Heart right ventricle (tissue), 16 donors: ENCODE measurements at regions of chr17 and their contacts with region 1.

Region 1: DNA sequence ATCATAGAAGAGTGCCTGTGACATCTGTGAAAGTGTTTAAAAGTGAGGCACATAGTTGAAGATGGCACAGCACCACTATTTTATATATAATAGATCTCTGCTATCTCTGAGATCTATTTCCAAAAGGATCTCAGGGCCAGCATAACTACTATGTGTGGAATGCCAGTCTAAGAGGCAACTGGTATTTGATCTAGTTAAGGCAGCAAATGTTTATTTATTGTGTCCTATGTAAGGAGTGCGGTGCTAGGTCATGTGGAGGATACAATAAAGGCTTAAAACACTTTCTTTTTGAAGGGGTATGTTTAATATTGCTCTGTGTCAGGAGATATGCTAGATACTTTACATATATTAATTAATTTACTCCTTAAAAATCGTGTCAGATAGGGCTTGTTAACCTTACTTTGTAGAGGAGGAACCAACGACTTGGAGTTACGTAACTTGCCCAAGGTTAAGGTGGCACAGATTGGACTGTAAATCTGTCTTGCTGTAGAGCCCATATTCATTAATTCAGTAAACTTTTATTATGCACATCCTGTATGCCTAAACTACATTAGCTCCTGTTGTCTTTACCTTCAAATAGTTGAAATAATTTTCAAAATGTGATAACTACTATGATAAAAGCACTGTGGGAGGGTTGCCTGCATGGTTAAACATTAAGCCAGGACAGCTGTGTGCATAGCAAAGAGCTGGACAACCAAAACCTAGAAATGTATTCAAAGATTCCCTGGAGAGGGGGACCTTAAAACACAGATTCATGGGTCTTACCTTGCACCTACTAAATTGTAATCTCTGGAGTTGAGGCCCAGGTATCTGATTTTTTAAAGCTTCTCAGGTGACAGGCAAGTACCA is 83.3 kb downstream of the NLK start:
- DNase-seq: no peak
- ATAC-seq: no peak
- H3K4me3 ChIP-seq: no peak overlapping the region
- H3K27ac ChIP-seq: no peak overlapping the region
- H3K4me1 ChIP-seq: peaks cover 0 to 6% (median 0%) of the 10 kb centered on the region in 9 donors
- H3K27me3 ChIP-seq: no peaks in the 10 kb centered on the region
- CTCF ChIP-seq: no peak

Region 2: GRCh38 chr17:28071891-28072606 is 53.7 kb before region 1 on chr17:
- intact Hi-C with region 1: loop called in 1 of 10 experiments (anchors 10 kb)
- DNase-seq: no peak
- ATAC-seq: no peak
- H3K4me3 ChIP-seq: no peak overlapping the region
- H3K27ac ChIP-seq: no peak overlapping the region
- H3K4me1 ChIP-seq: peaks cover 0 to 15% (median 0%) of the 10 kb centered on the region in 9 donors
- H3K27me3 ChIP-seq: no peaks in the 10 kb centered on the region
- CTCF ChIP-seq: no peak

Region 3: DNA sequence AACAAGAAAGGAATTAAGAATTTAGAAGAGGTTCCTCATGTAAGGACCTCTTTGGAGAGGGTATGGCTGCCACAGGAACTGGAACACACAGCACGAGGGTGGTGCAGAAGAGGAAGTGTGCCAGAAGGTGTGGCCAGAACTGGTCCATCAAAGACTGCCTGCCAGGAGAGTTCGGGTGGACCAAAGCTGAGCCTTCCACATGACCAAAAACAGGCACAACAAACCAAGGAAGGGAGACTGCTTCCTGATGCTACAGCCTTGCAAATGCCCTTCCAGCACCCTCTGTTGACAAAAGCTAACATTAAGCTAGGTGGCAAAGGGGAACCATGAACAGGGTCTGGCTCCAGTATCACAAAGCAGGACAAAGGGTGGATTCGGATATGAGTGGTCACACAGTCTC is 67.5 kb after region 1 on chr17:
- intact Hi-C with region 1: no loop called
- DNase-seq: peak; percentile 4 to 16
- ATAC-seq: peak; percentile 38 to 79 (median 52)
- H3K4me3 ChIP-seq: no peak overlapping the region
- H3K27ac ChIP-seq: peak overlapping the region in 1 of 10 donors; percentile 7
- H3K4me1 ChIP-seq: peaks cover 0 to 27% (median 0%) of the 10 kb centered on the region in 9 donors
- H3K27me3 ChIP-seq: no peaks in the 10 kb centered on the region
- CTCF ChIP-seq: peak in 2 of 9 donors; percentile 4 to 8